BJ (cell line): ENCODE measurements at regions of chr19 and their contacts with region 1.

Region 1: GRCh38 chr19:10142701-10143375 is 23.1 kb upstream of the EIF3G start:
- DNase-seq: no peak
- H3K4me3 ChIP-seq: no peak overlapping the region
- H3K27me3 ChIP-seq: no peaks in the 10 kb centered on the region
- CTCF ChIP-seq: no peak

Region 2: DNA sequence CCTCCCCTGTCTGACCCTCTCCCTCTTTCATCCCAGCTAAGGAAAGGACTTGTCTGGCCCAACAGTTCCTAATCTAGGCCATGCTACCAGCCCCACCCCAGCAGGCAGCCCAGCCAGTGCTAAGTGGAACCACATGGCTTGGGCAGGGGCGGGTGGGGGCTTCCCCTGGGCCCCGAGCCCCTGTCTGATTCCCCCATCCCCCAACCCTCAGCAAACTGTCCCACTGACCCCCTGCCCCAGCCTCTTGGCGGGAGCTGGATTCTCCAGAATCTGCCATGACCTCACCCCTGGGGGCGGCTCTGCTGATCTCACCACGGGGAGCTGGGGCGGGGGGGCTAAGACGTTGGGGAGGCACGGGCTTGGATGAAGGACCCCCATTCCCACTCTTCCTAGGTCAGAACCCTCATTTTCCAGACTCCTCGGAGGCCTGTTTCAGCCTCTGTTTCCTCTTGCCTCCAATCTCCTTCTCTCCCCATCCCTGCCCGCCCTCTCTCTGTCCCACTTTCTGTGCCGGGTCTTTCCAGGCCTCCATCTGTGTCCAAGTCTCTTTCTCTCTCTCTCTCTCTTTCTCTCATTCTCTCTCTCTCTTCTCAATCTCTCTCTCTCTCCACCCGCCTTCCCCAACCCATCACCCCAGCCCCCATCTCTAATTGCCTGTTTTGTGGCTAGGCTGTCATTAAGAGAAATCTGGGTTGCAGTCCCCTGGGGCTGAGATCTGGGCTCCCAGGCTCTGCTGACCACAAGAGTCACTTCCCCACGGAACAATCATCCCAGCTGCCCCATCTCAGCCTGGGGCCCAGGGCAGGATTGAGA is 135.3 kb before region 1 on chr19:
- CTCF ChIA-PET with region 1: no interaction called
- POLR2A ChIA-PET with region 1: no interaction called
- DNase-seq: peak; percentile 49
- H3K4me3 ChIP-seq: no peak overlapping the region
- H3K27me3 ChIP-seq: peaks cover 4% of the 10 kb centered on the region; the same call in 1 of the 2 replicates
- CTCF ChIP-seq: no peak

Region 3: DNA sequence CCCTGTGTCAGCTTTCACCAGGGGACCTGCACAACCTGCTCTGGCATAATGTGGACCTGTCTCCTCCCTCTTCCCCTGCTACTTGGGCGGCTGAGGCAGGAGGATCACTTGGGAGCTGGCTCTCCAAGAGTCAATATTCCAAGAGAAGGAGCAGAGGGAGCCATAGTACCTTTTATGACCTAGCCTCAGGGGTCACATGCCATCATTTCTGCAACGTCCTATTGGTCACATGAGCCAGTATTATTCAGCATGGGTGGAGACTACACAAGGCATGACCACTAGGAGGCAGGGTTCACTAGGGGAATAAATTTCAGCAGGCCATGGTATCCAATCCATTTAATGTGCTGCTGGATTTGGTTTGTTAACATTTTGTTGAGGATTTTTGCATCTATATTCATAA is 68.7 kb before region 1 on chr19:
- CTCF ChIA-PET with region 1: no interaction called
- POLR2A ChIA-PET with region 1: no interaction called
- DNase-seq: no peak
- H3K4me3 ChIP-seq: no peak overlapping the region
- H3K27me3 ChIP-seq: no peaks in the 10 kb centered on the region; the same call in 1 of the 2 replicates
- CTCF ChIP-seq: 0 out of 2 replicates have a peak, but pooled peaks have one; percentile 17

Region 4: DNA sequence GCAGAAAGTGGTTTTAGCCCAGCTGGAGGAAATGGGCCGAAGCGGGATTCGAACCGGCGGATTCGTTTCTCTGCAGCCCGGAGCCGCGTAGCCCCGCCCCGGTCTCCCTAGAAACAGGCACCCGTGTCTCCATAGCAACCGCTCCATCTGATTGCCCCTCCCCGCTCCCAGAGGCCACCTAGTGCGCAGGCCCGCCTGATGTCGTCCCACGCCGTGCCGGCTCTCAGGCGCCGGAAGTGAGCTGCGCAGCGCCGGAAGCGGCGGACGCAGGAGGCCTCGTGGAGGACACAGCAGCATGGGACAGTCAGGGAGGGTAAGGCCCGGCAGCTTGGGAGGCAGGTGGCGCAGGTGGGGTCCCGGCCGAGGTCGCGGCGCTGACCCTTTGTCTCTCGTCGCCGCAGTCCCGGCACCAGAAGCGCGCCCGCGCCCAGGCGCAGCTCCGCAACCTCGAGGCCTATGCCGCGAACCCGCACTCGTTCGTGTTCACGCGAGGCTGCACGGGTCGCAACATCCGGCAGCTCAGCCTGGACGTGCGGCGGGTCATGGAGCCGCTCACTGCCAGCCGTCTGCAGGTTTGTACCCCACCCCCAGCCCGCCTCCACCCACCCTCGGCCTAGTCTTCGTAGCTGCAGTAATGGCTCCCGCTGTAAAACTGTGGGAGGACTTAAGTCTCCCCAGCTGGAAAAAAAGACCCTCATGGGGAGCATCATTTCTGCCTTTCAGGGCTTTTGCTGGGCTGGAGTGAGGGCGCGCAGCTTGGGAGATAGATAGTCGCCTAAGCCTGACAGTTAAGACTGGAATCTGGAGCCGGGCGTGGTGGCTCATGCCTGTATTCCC is 36.5 kb before region 1 on chr19 and contains the start of gene PPAN:
- CTCF ChIA-PET with region 1: no interaction called
- POLR2A ChIA-PET with region 1: interaction called, 20 read pairs
- DNase-seq: peak; percentile 74
- H3K4me3 ChIP-seq: peak within 1 kb of the TSS; percentile 95
- H3K27me3 ChIP-seq: no peaks in the 10 kb centered on the region
- CTCF ChIP-seq: no peak
- polyA plus RNA-seq, gene PPAN: 16.9 and 18.1 TPM in 2 replicates